ENCODE measurements at regions of chr11 and their contacts with region 1.

Region 1: DNA sequence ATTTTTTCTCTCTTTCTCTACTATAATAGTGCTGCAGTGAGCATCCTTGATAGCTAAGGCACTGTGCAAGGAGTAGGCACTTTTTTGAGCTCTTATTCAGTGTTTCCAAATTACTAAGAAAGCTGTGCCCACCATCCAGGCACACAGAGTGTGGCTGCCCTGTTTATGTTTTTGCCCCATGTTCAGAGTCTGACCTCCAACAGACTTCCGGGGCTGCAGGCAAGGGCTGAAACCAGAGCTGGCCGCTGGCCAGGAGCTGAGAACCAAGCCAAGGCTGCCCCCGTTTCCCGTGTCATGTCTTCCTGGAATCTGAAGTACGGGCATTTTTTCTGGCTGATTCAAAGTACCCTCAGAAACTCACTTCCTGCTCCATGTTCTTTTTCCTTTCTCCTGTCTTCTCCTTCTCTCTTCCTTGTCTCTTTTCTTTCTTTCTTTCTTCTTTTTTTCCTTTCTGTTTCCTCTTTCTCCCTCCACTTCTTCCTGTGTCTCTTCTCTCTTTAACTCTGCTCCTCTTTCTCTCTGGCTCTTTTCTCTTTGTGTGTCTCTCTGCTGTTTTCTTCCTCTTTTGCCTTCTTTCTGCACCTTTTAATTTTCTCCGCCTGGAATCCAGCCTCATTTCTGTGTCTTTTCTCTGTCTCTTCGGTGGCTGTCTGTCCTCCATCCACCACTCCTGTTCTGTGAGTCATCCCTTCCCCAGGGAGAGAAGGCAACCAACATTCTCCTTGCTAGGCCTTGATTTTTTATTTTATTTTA is 17.0 kb upstream of the KCTD14 start:
- DNase-seq: peak; percentile 67
- ATAC-seq: peak; percentile 50
- H3K4me3 ChIP-seq: peak overlapping the region; percentile 4 to 34 (median 11); a peak in 3 of 6 replicates
- H3K27ac ChIP-seq: peak overlapping the region; percentile 73
- H3K4me1 ChIP-seq: peaks cover 74% of the 10 kb centered on the region
- H3K27me3 ChIP-seq: no peaks in the 10 kb centered on the region
- CTCF ChIP-seq: peak; percentile 25
- EP300 ChIP-seq: peak in 1 of 2 experiments; percentile 34; a peak in 1 of 4 replicates
- POLR2A ChIP-seq: no peak; a peak in 1 of 4 replicates
- RAD21 ChIP-seq: no peak

Region 2: GRCh38 chr11:78022397-78023396 is 17.4 kb before region 1 on chr11 and contains the start of gene KCTD14:
- CTCF ChIA-PET with region 1: no interaction called
- POLR2A ChIA-PET with region 1: interaction called, 12 read pairs
- in situ Hi-C with region 1: no loop called
- intact Hi-C with region 1: no loop called
- DNase-seq: peak; percentile 53
- ATAC-seq: peak; percentile 94
- H3K4me3 ChIP-seq: peak within 1 kb of the TSS; percentile 56 to 79 (median 67)
- H3K27ac ChIP-seq: peak within 1 kb of the TSS; percentile 63
- H3K4me1 ChIP-seq: peaks cover 50% of the 10 kb centered on the region
- H3K27me3 ChIP-seq: no peaks in the 10 kb centered on the region
- CTCF ChIP-seq: peak; percentile 31
- EP300 ChIP-seq: no peak
- POLR2A ChIP-seq: peak; percentile 42 to 89; a peak in 3 of 4 replicates
- RAD21 ChIP-seq: no peak
- total RNA-seq, gene KCTD14: 10.3 and 15.3 TPM in 2 replicates

Measured in HepG2 (cell line).